PC-3 (cell line): ENCODE measurements at regions of chrX and their contacts with region 1.

Region 1: DNA sequence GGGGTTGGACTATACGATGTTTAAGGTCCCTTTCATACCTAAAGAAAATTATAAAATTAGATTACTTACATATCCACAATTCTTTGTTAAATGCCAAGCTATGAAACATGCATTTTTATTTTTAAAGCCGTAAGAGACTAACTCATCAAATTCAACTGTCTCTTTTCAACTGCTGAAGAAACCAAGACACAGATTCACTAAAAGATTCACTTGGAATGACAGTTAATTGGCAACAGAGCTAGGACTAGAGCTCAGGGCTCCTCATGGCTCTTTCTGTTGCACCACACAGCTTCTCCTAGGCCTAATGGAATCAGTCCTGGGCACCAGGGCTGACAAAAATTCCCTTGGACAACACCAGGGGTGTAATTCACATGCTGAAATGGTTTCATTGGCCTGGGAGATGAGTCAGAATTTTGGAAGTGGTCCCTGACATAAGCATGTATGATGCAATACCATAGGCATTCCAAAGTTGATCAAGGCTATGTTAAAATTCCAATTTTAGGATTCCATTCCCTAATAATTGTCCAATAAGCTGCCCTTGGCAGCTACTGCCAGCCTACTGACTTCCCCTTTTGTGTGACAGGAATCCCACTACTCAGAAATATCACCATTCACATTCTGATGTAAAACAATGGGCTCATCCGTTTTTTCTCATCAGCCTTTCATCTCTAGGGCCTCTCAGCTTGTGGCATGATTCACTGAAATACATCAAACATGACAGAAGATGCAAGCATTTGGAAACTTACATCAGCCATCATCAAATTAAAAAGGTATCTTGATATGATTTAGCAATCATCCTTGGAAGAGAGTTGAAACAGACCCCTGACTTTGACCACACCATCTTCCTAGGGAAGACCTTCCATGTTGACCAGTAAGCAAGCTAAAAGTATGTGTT is 54.2 kb downstream of the PLAC1 start:
- DNase-seq: peak; percentile 85
- ATAC-seq: peak; percentile 77
- H3K4me3 ChIP-seq: no peak overlapping the region
- H3K27ac ChIP-seq: peak overlapping the region; percentile 70
- H3K4me1 ChIP-seq: peaks cover 35% of the 10 kb centered on the region
- H3K27me3 ChIP-seq: no peaks in the 10 kb centered on the region
- CTCF ChIP-seq: peak; percentile 32; the same call in 1 of the 2 replicates

Region 2: DNA sequence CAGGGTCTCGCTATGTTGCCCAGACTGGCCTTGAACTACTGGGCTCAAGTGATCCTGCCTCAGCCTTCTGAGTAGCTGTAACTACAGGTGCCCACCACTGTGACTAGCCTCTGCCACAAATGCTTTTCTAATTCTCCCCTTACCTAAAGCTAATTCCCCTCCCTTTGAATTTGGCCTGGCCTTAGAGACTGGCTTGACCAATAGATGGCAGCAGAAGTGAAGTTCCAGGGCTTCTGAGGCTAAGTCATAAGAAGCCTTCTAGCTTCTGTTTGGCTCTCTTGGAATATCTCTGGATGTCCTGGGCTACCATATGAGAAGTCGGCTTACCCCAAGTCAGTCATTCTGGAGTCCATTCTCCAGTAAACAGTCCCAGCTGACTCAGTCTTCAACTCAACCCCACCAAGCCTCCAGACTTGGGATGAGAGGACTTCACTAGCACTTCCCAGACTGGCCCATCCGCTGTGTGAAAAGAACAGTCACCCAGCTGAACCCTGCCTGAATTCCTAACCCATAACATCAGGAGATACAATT is 83.1 kb before region 1 on chrX:
- CTCF ChIA-PET with region 1: interaction called, 10 read pairs
- POLR2A ChIA-PET with region 1: no interaction called
- intact Hi-C with region 1: no loop called
- DNase-seq: peak; percentile 79
- ATAC-seq: peak; percentile 99
- H3K4me3 ChIP-seq: no peak overlapping the region
- H3K27ac ChIP-seq: no peak overlapping the region
- H3K4me1 ChIP-seq: no peaks in the 10 kb centered on the region
- H3K27me3 ChIP-seq: no peaks in the 10 kb centered on the region
- CTCF ChIP-seq: peak; percentile 80

Region 3: DNA sequence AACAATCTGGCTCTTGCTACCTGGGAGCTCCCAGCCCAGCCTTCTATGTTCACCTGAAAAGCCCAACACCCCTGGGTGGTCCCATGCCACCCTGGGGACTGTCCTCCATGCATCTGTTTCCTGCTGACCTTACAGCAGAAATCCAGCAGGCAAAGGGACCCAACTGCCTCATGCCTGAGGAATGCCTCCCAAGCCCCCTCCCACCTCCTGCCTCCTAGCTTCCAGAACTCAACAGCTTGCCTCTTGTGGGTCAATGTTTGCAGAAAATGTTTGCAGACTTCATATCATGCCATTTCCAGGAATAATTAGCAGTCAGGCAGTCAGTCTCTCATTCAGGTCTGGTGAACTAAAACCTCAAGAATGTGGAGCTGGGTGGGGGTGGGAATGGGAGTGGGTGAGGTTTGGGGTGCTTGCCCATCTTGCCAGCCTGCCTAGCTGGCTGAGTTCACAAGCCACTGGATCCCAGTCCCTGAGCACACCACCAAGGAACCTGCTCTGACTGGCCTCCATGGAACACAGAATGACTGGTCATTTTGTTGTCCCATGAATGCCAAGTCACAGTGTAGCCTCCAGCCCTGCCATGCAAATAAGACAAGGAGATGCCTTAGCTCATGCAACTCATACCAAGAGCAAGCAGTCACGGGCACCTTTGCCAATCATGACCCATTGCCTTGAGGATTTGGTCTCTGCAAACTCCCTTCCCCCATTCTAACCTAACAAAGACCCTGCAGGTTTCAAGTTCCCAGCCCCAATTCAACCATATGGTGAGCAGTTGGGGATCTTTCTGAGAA is 66.3 kb after region 1 on chrX:
- CTCF ChIA-PET with region 1: no interaction called
- POLR2A ChIA-PET with region 1: no interaction called
- intact Hi-C with region 1: no loop called
- DNase-seq: peak; percentile 91
- ATAC-seq: peak; percentile 77
- H3K4me3 ChIP-seq: peak overlapping the region; percentile 20; the same call in 1 of the 2 replicates
- H3K27ac ChIP-seq: peak overlapping the region; percentile 94
- H3K4me1 ChIP-seq: peaks cover 37% of the 10 kb centered on the region
- H3K27me3 ChIP-seq: no peaks in the 10 kb centered on the region
- CTCF ChIP-seq: no peak

Region 4: DNA sequence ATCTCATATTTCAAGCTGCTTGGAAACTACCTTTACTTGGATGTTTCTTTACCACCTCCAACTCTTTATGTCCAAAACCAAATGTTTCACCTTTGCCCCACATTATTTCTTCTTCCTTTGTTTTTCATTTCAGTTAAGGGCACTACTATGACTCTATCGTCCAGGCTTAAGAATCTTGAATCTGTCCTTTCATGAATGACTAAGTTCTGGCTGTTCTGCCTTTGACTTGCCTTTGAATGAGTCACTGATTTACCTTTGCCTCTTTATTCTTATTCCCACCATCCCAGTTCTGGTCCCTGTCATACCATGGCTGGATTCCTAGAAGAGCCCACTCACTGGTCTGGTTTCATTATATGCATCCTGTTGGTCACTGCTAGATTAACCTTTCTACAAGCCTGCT is 84.8 kb after region 1 on chrX:
- CTCF ChIA-PET with region 1: no interaction called
- POLR2A ChIA-PET with region 1: interaction called, 11 read pairs
- intact Hi-C with region 1: no loop called
- DNase-seq: peak; percentile 84
- ATAC-seq: peak; percentile 76
- H3K4me3 ChIP-seq: 0 out of 2 replicates have a peak overlapping the region, but pooled peaks have one; percentile 2
- H3K27ac ChIP-seq: peak overlapping the region; percentile 92
- H3K4me1 ChIP-seq: peaks cover 55% of the 10 kb centered on the region
- H3K27me3 ChIP-seq: no peaks in the 10 kb centered on the region
- CTCF ChIP-seq: no peak

Region 5: DNA sequence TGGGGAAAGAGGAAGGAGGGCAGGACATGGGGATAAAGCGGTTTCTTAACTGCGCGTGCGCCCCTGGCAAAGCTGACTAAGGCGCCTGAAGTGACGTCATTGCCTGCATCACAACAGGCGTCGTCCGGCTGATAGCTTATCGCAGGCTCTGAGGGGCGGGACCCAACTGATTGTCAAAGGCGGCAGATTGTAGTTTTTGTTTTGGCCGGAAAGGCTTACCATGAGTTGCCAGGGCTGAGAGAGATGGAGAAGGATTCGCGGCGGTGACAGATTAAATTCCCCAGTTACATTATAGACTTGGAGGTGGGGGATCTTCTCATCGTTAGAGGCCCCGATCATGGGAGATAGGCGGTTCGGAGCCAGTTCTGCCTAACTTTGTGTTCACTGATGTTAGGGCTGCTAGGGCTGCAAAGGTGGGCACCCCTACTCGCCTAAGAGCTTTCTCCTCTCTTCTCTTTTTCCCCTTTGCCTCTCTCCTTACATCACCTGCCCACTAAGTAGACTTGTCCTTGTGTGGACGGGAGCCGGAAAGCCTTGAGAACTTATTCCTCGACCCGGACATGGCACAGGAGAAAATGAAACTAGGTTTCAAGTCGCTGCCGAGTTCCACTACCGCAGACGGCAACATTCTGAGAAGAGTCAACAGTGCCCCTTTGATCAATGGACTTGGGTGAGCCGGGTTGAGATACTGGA is 203.1 kb after region 1 on chrX:
- CTCF ChIA-PET with region 1: interaction called, 15 read pairs
- POLR2A ChIA-PET with region 1: no interaction called
- intact Hi-C with region 1: no loop called
- DNase-seq: peak; percentile 83
- ATAC-seq: peak; percentile 91
- H3K4me3 ChIP-seq: peak overlapping the region; percentile 81
- H3K27ac ChIP-seq: peak overlapping the region; percentile 28
- H3K4me1 ChIP-seq: no peaks in the 10 kb centered on the region
- H3K27me3 ChIP-seq: no peaks in the 10 kb centered on the region
- CTCF ChIP-seq: no peak

Region 6: DNA sequence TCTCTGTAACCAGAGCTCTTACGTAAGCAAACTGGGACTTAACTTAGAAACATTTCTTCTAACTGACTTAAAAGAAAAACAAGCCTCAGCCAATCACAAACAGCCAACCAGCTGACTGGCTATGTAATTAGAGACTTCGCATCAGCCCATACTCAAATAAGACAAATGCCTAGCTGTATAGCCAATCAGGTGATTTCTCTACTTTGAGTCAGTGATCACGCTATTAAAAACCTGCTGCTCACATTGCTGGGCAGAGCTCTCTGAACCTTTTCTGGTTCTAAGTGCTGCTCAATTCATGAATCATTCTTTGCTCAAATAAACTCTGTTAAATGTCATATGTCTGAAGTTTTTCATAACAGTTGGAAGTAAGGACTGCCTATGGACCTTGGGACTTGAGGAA is 807.8 kb after region 1 on chrX:
- CTCF ChIA-PET with region 1: no interaction called
- POLR2A ChIA-PET with region 1: no interaction called
- intact Hi-C with region 1: no loop called
- DNase-seq: peak; percentile 61
- ATAC-seq: no peak
- H3K4me3 ChIP-seq: no peak overlapping the region
- H3K27ac ChIP-seq: peak overlapping the region; percentile 59
- H3K4me1 ChIP-seq: peaks cover 11% of the 10 kb centered on the region
- H3K27me3 ChIP-seq: no peaks in the 10 kb centered on the region
- CTCF ChIP-seq: no peak

Region 7: DNA sequence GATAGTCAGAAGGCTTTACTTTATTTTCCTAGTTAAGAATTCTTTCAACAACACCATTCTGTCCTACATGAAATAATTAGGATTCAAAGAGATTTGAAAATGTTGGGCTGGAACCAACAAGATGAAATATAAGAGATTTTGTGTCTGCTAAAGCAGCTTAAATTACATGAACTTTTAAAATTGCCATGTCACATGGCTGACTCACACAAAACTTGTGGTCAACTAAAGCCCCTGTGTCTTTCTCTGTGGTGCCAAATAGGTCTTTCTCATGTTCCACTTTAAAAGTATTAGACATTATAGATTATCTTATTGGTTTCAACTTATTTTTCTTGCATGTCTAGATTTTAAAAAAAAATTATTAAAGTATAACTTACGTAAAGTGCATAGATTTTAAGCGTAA is 1482.5 kb after region 1 on chrX:
- CTCF ChIA-PET with region 1: no interaction called
- POLR2A ChIA-PET with region 1: no interaction called
- intact Hi-C with region 1: no loop called
- DNase-seq: peak; percentile 57
- ATAC-seq: peak; percentile 45
- H3K4me3 ChIP-seq: no peak overlapping the region
- H3K27ac ChIP-seq: peak overlapping the region; percentile 14; the same call in 1 of the 2 replicates
- H3K4me1 ChIP-seq: 0 out of 2 replicates have a peak, but pooled peaks cover 3% of the 10 kb centered on the region
- H3K27me3 ChIP-seq: no peaks in the 10 kb centered on the region
- CTCF ChIP-seq: no peak